Stomach (tissue), 19 donors: ENCODE measurements at regions of chr19 and their contacts with region 1.

Region 1: DNA sequence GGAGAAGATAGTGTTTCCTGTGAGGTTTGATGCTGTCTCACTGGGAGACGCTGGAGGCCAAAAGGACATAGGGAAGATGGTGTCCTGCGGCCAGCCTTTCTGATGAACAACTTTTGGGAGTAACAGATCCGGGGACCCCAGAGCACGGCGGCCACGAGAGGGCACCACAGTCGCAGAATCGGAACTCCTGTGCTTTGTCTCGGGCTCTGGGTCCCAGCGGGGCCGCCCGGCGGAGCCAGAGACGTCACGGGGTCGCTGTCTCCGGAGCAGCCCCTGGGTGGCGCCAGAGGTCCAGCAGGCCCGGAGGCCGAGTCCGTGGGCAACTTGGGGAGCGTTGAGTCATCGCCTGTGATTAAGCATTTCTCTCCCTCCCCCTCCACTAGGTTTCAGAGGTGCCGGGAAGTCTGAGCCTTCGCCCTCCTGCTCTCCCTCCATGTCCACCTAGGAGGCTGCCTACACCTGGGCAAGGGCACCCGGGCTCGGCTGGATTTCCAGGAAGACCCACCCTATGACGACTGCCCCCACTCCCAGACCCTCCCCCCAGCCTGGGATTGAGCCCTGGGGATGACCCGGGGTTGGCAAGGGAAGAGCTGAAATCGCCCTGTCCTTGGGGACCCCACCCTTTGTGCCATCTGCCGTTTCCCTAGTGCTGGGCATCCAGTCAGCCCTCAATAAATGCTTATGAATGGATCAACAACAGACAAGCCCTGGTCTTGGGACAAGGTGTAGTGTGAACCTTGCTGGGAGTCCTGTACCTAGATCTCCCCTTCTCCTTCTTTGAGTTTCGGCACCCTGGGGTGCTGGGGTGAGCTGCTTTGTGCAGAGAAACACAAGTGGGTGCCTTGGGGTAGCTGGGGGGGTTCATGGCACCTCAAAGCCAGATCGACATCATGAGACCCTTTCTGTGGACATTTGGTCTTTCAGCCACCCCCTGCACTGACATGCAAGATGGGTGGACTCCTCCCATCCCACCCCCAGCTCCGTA is 3.4 kb downstream of the NANOS3 start:
- DNase-seq: peak; percentile 99
- H3K4me3 ChIP-seq: peak overlapping the region in 3 of 4 donors; percentile 19 to 33 (median 26)
- H3K27ac ChIP-seq: peak overlapping the region; percentile 15 to 85 (median 83)
- H3K4me1 ChIP-seq: peaks cover 18 to 49% (median 40%) of the 10 kb centered on the region in 4 donors
- H3K27me3 ChIP-seq: no peaks in the 10 kb centered on the region
- CTCF ChIP-seq: peak in 6 of 7 experiments; percentile 84 to 100 (median 98)
- EP300 ChIP-seq: no peak
- POLR2A ChIP-seq: no peak

Region 2: GRCh38 chr19:14059093-14059480 is 178.7 kb after region 1 on chr19:
- intact Hi-C with region 1: loop called (anchors 10 kb)
- DNase-seq: peak; percentile 34 to 45
- H3K4me3 ChIP-seq: peak overlapping the region in 3 of 4 donors; percentile 16 to 54 (median 51)
- H3K27ac ChIP-seq: no peak overlapping the region
- H3K4me1 ChIP-seq: peaks cover 23 to 53% (median 45%) of the 10 kb centered on the region in 4 donors
- H3K27me3 ChIP-seq: peaks cover 0 to 68% (median 13%) of the 10 kb centered on the region in 3 donors
- CTCF ChIP-seq: peak in 5 of 7 experiments; percentile 16 to 66 (median 45)
- EP300 ChIP-seq: no peak
- POLR2A ChIP-seq: no peak